Panc1 (cell line): ENCODE measurements at regions of chr9 and their contacts with region 1.

Region 1: DNA sequence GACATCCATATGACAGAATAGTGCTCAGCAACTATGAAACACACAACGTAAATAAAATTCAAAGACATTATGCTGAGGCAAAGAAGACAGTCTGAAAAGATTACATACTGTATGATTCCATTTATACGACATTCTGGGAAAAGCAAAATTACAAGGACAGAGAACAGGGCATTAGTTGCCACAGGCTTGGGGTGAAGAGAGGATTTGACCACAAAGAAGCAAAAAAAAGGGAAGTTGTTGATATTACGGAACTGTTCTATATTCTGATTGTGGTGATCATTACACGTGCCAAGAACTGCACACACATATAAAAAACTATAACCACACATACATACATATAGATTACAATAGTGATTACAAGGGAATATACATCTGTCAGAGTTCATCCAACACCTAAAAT is 24.1 kb downstream of the CDK5RAP2 start:
- DNase-seq: no peak
- ATAC-seq: no peak
- H3K4me3 ChIP-seq: no peak overlapping the region
- H3K27ac ChIP-seq: no peak overlapping the region
- H3K4me1 ChIP-seq: no peaks in the 10 kb centered on the region
- H3K27me3 ChIP-seq: no peaks in the 10 kb centered on the region
- CTCF ChIP-seq: no peak

Region 2: DNA sequence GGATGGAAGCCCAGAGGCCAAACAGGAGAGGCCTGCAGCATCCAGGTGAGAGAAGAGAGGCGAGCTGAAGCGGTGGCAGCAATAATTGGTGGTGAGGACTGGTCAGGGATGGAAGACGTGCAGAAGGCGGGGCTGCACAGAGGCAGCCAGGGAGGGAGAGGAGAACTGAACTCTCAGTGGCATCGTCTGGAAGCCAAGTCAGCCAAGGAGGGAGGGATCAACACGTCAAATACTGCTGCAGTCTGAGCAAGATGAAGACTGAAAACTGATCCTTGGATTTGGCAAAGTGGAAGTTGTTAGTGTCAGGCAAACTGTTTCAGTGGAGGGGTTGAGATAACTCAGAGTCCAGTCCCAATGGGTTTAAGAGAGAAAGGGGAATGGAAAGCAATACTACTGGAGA is 121.3 kb before region 1 on chr9:
- CTCF ChIA-PET with region 1: no interaction called
- POLR2A ChIA-PET with region 1: no interaction called
- in situ Hi-C with region 1: no loop called
- intact Hi-C with region 1: no loop called
- DNase-seq: no peak
- ATAC-seq: no peak
- H3K4me3 ChIP-seq: no peak overlapping the region
- H3K27ac ChIP-seq: no peak overlapping the region
- H3K4me1 ChIP-seq: no peaks in the 10 kb centered on the region
- H3K27me3 ChIP-seq: no peaks in the 10 kb centered on the region
- CTCF ChIP-seq: no peak

Region 3: DNA sequence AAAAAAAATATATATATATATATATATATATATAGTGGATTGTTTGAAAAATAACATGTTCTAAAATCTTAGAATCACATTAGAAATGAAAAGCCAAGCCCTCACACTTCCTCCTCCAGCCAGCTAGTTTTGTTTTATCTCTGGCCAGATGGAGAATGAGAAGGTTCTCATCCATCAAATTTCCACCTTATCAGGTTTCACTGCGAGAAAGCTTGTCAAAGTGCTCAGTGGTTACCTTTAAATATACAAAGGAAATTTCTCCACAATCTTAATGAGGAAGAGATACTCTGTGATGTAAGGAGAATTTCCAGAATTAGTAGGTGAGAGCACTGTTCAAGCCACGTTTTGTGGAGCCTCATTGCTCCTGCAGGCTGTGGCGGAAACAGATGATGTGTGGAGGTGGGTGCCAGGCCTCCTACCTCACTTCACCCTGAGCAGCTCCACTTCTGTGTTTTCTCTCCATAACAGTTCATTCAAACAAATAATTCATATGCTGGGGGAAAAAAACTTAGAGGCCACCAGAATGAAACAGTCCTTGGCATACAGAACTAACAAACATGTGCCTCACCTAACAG is 47.8 kb before region 1 on chr9:
- CTCF ChIA-PET with region 1: interaction called, 12 read pairs
- POLR2A ChIA-PET with region 1: no interaction called
- in situ Hi-C with region 1: no loop called
- intact Hi-C with region 1: no loop called
- DNase-seq: no peak
- ATAC-seq: no peak
- H3K4me3 ChIP-seq: no peak overlapping the region
- H3K27ac ChIP-seq: no peak overlapping the region
- H3K4me1 ChIP-seq: no peaks in the 10 kb centered on the region
- H3K27me3 ChIP-seq: no peaks in the 10 kb centered on the region
- CTCF ChIP-seq: no peak

Region 4: DNA sequence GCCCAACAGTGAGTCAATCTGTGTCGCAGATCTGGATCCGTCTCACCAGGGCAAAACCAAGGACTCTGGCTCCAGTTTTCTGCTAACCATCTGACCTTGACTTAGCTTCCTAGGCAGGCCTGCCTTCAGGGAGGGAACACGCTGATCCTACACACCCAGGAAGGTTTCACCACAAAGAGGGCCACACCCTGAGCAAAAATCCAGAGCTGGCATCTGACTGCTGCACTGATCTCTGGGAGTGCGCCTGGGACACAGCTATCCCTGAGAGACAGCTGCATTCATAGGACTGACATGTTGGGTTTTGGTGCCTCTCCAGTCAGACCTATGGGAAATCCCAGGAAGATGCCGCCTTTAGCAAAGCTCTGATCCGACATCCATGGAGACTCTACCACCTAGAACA is 23.4 kb before region 1 on chr9:
- CTCF ChIA-PET with region 1: no interaction called
- POLR2A ChIA-PET with region 1: no interaction called
- in situ Hi-C with region 1: no loop called
- intact Hi-C with region 1: no loop called
- DNase-seq: no peak
- ATAC-seq: no peak
- H3K4me3 ChIP-seq: no peak overlapping the region
- H3K27ac ChIP-seq: no peak overlapping the region
- H3K4me1 ChIP-seq: no peaks in the 10 kb centered on the region
- H3K27me3 ChIP-seq: no peaks in the 10 kb centered on the region
- CTCF ChIP-seq: no peak